ENCODE measurements at regions of chr9 and their contacts with region 1.

Region 1: GRCh38 chr9:126407125-126407870 is 80.7 kb downstream of the MVB12B start:
- DNase-seq: no peak
- ATAC-seq: peak in 2 of 4 donors; percentile 52 to 54
- H3K4me3 ChIP-seq: no peak overlapping the region
- H3K27ac ChIP-seq: no peak overlapping the region
- H3K4me1 ChIP-seq: peaks cover 0 to 18% (median 9%) of the 10 kb centered on the region in 12 donors
- H3K27me3 ChIP-seq: no peaks in the 10 kb centered on the region
- CTCF ChIP-seq: no peak
- POLR2A ChIP-seq: no peak

Region 2: DNA sequence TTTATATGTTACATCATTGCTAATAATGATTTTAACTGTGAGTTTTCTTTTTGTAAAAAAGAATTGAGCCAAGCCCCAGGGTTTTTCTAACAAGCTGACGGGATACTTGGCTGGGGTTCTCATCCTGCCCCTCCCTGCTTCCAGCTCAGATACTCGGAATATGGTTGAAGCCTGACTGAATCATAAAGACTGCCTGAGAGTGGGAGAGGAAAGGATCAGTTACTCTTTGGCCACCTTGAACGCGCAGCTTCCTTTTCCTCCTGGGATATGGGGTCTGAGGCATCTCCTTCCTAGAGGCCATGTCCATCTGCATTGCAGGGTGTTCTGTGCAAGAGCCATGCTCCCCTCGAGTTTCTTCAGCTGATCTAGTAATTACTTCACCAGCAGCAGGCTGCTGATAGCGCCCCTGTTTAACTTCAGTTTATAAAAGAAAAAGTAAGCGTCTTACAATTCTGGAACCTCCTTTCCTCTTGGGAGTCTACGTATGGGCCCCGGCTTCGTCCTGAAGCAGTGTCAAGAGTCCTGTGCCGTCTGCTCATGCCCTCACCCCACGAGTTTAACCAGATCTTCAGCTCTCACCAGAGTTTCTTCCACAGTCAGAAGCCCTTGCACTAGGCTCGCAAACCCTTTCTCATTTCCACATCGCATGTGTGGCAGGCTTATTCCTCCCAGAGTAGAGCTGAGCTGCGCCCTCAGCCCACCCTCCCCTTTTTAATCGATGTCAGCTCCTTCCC is 49.3 kb after region 1 on chr9:
- intact Hi-C with region 1: no loop called
- DNase-seq: peak in 1 of 5 donors; percentile 9
- ATAC-seq: peak in 3 of 4 donors; percentile 41 to 67 (median 62)
- H3K4me3 ChIP-seq: no peak overlapping the region
- H3K27ac ChIP-seq: peak overlapping the region in 1 of 12 donors; percentile 18
- H3K4me1 ChIP-seq: peaks cover 0 to 12% (median 2%) of the 10 kb centered on the region in 12 donors
- H3K27me3 ChIP-seq: no peaks in the 10 kb centered on the region
- CTCF ChIP-seq: no peak
- POLR2A ChIP-seq: no peak

Region 3: GRCh38 chr9:126482361-126483044 is 75.2 kb after region 1 on chr9:
- intact Hi-C with region 1: loop called in 1 of 10 experiments (anchors 10 kb)
- DNase-seq: peak in 2 of 5 donors; percentile 60 to 67
- ATAC-seq: peak in 3 of 4 donors; percentile 33 to 52 (median 43)
- H3K4me3 ChIP-seq: peak overlapping the region in 1 of 12 donors; percentile 12
- H3K27ac ChIP-seq: no peak overlapping the region
- H3K4me1 ChIP-seq: peaks cover 0 to 3% (median 0%) of the 10 kb centered on the region in 12 donors
- H3K27me3 ChIP-seq: no peaks in the 10 kb centered on the region
- CTCF ChIP-seq: no peak
- POLR2A ChIP-seq: no peak